AG04450 (cell line): ENCODE measurements at regions of chr5 and their contacts with region 1.

Region 1: GRCh38 chr5:114065912-114066311 is 296.0 kb upstream of the KCNN2 start:
- DNase-seq: no peak
- H3K4me3 ChIP-seq: no peak overlapping the region
- H3K27ac ChIP-seq: no peak overlapping the region
- H3K27me3 ChIP-seq: no peaks in the 10 kb centered on the region
- CTCF ChIP-seq: no peak

Region 2: DNA sequence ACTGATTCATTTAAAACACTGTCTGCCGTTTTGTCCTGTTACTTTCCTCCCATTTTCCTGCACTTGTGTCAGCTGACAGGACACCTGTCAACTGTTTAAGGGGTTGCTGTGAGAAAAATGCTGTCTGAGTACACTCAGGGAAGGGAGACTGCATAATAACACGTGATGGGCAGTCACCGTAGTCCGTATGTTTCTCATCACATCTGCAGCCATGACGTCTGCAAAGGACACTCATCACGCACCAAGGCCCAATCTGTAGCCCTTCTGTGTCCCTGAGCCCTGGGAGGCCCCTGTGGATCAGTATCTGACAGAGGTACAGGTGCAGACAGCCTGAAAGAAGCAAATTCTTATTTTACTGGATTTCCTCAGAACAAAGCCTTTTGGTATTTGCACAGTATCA is 156.1 kb before region 1 on chr5:
- CTCF ChIA-PET with region 1: interaction called, 12 read pairs
- POLR2A ChIA-PET with region 1: no interaction called
- DNase-seq: no peak
- H3K4me3 ChIP-seq: no peak overlapping the region
- H3K27ac ChIP-seq: no peak overlapping the region
- H3K27me3 ChIP-seq: no peaks in the 10 kb centered on the region
- CTCF ChIP-seq: no peak

Region 3: GRCh38 chr5:114223866-114224265 is 158.0 kb after region 1 on chr5:
- CTCF ChIA-PET with region 1: no interaction called
- POLR2A ChIA-PET with region 1: no interaction called
- DNase-seq: no peak
- H3K4me3 ChIP-seq: no peak overlapping the region
- H3K27ac ChIP-seq: no peak overlapping the region
- H3K27me3 ChIP-seq: no peaks in the 10 kb centered on the region
- CTCF ChIP-seq: peak; percentile 23; the same call in 1 of the 2 replicates